ENCODE measurements at regions of chr14 and their contacts with region 1.

Region 1: DNA sequence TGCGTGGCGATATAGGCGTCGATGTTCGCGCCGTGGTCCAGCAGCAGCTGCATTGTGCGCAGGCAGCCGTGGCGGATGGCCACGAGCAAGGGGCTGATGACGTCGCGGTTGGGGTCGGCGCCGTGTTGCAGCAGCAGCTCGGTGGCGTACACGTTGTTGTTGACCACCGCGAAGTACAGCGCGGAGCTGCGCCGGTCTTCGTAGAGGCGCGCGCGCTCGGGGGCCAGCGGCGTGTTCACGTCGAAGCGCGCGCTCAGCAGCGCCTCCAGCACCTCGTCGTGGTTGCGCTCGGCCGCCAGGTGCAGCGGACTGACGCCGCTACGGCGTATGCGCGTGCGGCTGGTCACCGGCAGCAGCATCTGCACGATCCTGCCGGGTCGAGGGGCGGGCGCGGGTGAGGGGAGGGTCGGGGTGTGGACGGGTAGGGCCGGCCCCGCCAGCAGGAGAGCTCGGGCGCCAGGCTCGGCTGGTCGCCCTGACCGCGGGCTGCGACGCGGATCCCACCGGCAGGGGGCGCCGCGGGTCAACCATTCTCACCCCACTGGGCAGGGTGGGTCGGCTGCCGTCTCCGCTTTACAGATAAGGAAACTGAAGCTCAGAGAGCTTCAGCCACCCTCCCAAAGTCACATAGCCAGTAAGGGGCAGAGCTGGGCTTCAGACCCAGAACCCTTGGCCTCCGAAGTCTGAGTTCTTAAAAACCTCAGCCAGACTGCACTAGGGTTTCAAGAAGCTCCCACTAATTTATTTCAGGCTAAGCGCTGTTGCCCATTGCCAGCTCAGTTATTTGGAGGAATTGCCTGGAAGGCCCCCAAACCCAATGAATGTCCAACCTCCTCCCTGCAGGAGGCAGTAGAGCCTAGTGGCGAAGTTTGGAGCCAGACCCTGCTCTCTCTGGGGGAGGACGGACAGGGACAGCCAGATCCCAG is 12.4 kb downstream of the FAM181A start:
- DNase-seq: peak; percentile 89

Region 2: DNA sequence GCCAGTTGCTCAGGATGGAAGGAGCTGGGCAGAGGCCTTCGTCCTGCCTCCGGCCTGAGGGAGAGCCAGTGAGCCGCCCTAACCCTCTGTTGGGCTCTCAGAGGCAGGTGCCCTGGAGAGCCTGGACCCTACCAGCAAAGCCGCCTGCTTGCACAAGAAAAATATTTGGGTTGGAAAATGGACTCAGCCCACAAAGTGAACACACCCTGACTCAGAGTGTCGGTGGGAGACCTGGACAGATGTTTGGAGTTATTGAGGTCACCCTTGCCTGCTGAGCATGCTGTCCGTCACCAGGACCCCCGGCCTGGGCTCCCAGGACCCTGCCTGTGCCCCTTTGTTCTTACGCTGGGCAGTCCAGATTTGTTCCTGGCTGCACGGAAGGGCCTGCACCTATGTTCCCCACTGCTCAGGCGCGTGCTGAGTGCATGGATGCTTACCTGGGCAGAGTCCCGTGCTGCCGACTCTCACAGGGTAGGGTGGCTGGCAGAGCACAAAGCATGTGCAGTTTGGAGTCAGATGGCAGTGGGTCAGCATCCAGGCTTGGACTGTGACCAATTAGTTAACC is 10.0 kb after region 1 on chr14:
- CTCF ChIA-PET with region 1: interaction called, 13 read pairs
- POLR2A ChIA-PET with region 1: no interaction called
- DNase-seq: no peak

Region 3: DNA sequence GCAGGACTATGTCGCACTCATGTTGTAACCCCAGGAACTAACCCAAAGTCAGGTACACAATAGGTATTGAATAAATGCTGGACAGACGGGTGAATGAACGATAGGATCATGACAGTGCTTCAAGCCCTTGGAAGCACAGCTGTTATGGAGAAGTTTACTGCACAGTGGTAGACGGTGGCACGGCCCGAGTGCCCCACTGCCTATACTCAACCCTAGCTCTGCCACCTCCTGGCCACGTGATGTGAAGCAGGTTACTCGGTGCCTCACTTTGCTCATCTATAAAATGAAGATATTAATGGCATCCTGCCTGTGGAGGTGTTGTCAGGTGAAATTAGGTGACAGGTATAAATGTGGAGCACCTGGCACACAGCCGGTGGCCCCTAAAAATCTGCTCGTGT is 31.0 kb after region 1 on chr14:
- CTCF ChIA-PET with region 1: interaction called, 15 read pairs
- POLR2A ChIA-PET with region 1: no interaction called
- DNase-seq: peak; percentile 18

Region 4: DNA sequence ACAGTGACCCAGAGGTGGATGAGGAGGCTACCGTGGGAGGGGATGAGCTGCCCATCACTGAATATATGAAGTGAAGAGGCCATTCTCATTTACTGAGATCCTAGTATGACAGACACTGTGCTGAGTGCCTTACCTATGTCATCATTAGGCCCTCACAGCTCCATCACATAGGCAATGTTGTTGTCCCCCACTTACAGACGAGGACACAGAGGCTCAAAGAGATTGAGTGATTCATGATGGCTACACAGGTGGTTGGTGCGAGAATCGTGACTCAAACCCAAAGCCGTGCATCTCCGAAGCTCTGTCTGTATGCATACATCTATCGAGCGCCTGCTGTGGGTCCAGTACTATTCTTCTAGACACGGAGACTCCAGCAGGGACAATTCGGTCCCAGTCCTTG is 51.6 kb after region 1 on chr14:
- CTCF ChIA-PET with region 1: interaction called, 11 read pairs
- POLR2A ChIA-PET with region 1: no interaction called
- DNase-seq: no peak

Region 5: DNA sequence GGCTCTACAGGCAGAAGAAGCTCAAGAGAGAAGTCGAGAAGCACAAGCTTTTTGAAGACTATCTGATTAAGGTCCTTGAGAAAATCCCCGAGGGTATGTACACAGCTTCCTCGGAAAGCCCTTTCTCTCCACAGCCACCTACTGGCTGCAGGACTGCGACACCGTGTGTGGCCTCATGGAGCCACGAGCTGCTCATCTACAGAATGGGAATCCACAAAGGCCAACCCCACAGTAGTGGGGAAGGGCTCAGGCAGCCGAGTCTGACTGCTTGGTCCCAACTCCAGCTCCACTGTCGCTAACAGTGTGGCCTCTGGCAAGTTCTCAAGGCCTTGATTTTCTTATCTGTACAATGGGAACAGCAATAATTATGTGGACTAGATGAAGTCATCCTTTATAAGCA is 60.0 kb after region 1 on chr14:
- CTCF ChIA-PET with region 1: interaction called, 17 read pairs
- POLR2A ChIA-PET with region 1: no interaction called
- DNase-seq: no peak

Region 6: GRCh38 chr14:94005324-94006073 is 65.9 kb after region 1 on chr14:
- CTCF ChIA-PET with region 1: interaction called, 17 read pairs
- POLR2A ChIA-PET with region 1: no interaction called
- DNase-seq: peak; percentile 53

Region 7: DNA sequence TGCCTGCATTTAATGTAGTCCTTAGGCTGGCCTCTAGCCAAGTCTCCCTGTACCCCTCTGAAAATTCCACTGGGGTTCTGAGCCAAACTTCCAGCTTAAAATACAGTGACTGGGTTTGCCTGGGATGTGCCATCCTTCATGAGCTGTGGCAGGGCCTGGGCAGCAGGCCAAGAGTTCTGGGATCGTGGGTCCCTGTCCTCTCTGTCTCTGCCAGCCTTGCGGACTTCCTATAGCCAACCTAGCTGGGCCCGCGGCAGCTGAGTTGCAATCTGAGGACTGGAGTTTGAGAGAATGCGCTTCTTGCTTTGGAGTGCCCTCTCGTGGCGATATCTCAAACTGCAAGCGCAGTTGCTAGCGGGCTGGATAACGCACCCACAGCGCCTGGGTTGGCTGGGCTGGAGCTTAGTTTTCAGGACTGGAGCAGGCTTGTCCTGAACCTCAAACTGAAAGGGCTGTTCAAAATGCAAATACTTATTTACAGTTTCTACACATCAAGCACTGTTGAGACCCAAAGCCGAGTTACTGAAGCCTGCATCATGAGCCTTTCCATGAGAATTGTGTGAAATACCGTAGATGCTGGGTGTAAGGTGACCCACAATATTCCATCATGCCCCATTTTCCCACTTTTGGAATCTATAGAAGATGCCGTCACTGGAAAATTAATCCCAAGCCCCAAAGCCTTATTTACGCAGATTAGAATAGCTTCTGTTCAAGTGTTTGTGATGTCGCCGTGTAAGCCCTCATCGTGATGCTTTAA is 197.2 kb after region 1 on chr14:
- CTCF ChIA-PET with region 1: interaction called, 11 read pairs
- POLR2A ChIA-PET with region 1: no interaction called
- DNase-seq: peak; percentile 81

Region 8: GRCh38 chr14:94158239-94158883 is 218.8 kb after region 1 on chr14:
- CTCF ChIA-PET with region 1: no interaction called
- POLR2A ChIA-PET with region 1: no interaction called
- DNase-seq: no peak